ENCODE measurements at regions of chr18 and their contacts with region 1.

Region 1: DNA sequence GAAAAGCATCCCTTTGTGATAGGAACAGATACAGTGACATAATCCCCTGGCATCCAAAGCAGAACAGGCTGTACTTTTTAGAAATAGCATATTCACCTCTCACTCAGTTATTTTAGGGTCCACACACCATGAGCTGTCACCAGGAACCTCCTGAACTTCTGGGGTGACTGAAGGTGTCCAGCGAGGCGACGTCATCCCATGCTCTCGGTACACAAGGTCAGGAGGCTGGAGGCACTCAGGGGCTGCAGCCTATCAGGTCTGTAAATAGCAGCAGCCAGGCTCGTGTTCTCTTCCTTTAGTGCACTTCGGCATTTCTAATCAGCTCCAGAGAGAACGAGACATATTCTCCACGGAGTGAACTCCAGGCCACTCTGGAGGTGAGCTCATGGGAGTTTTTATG is 98.3 kb downstream of the GATA6 start:
- DNase-seq: no peak
- H3K4me3 ChIP-seq: no peak overlapping the region
- H3K27ac ChIP-seq: no peak overlapping the region
- H3K4me1 ChIP-seq: no peaks in the 10 kb centered on the region
- H3K27me3 ChIP-seq: no peaks in the 10 kb centered on the region
- CTCF ChIP-seq: no peak

Region 2: DNA sequence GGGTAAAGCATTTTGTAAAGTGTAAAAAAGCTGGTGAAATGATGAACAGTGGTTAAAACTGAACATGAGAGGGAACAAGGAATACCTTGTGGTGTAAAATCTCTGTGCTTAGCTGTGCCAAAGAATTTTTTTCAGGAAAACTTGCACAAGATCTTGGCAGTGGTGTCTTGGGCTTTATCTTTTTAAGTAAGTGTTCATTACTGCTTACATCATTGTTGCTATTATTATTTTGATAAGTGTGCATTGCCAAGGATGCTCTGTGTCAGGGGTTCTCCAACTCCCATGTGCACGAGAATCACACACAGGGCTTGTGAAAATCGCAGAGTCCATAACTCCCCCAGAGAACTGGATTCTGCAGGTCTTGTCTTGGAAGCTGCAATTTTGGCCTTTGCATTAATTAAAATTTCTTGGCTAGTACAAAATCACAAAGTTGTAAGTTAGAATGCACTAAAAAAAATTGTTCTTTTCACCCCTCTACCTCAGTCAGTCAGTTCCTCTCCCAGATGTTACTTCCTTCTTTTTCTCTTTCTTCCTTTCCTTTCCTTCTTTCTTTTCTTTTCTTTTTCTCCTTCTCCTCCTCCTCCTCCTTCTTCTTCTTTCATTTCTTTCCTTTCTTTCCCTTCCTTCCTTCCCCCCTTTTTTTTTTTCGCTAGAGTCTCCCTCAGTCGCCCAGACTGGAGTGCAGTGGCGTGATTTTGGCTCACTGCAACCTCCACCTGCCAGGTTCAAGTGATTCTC is 60.5 kb before region 1 on chr18:
- intact Hi-C with region 1: loop called (anchors 10 kb)
- DNase-seq: no peak
- H3K4me3 ChIP-seq: no peak overlapping the region
- H3K27ac ChIP-seq: no peak overlapping the region
- H3K4me1 ChIP-seq: no peaks in the 10 kb centered on the region
- H3K27me3 ChIP-seq: no peaks in the 10 kb centered on the region
- CTCF ChIP-seq: no peak

Measured in kidney (tissue), 22 donors.